Activated naive CD8-positive, alpha-beta T cell treated with anti-CD3 and anti-CD28 coated beads, Interleukin-2, amount 10 ng/mL, durations not matched to agents 7 days and 5 days (primary cell): ENCODE measurements at regions of chr11 and their contacts with region 1.

Region 1: DNA sequence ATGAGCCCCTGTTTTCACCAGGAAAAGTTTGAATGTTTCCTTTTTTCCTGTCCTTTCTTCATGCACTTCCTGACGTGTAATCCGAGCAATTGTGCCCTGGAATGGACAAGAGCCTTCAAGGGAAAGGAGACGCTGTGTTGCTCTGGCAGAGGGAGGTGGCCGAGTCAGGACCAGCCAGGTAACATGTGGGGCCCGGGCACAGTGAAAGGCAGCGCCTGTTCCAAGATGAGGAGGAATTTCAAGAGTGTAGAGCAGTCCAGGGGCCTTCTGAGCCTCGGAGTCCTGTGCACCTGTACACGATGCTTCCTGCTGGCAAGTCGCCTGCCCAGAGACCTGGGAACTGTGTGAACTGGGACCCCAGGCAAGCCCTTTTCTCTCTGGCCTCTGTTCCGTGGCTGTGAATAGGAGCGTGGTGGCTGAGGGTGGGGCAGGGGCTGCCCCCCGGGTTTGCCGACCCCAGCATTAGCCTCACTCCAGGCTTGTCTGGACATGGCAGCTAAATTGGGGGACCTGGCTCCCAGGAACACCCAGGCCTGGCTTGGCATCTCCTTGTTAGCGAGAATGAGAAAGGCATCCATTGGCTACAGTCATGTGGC is 92.0 kb downstream of the MYEOV start:
- DNase-seq: peak; percentile 8
- ATAC-seq: no peak
- H3K4me3 Mint-ChIP-seq: no peak overlapping the region
- H3K27ac Mint-ChIP-seq: no peak overlapping the region
- H3K4me1 Mint-ChIP-seq: peaks cover 2% of the 10 kb centered on the region
- H3K27me3 Mint-ChIP-seq: peaks cover 2% of the 10 kb centered on the region

Region 2: DNA sequence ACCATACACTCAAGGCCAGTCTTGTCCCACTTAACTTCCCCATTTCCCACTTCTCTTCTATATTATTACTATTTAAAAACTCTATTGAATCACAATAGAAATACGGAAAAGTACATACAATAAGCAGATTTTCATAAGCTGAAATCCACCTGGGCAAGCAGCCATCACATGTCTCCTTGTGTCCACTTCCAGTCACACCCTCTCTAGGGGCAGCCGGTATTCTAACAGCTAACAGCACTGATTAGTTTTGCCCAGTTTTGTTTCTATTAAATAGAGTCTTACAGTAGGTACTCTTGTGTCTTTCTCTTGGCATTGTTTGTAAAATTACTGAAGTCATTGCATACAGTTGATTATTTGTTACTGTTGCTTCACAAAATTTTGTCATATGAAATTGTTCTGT is 887.6 kb before region 1 on chr11:
- POLR2A ChIA-PET with region 1: interaction called, 11 read pairs
- DNase-seq: no peak
- ATAC-seq: no peak
- H3K4me3 Mint-ChIP-seq: no peak overlapping the region
- H3K27ac Mint-ChIP-seq: no peak overlapping the region
- H3K4me1 Mint-ChIP-seq: peaks cover 21% of the 10 kb centered on the region
- H3K27me3 Mint-ChIP-seq: no peaks in the 10 kb centered on the region

Region 3: GRCh38 chr11:69352715-69353325 is 33.1 kb before region 1 on chr11:
- POLR2A ChIA-PET with region 1: no interaction called
- DNase-seq: no peak
- ATAC-seq: peak; percentile 66
- H3K4me3 Mint-ChIP-seq: no peak overlapping the region
- H3K27ac Mint-ChIP-seq: no peak overlapping the region
- H3K4me1 Mint-ChIP-seq: peaks cover 3% of the 10 kb centered on the region
- H3K27me3 Mint-ChIP-seq: peaks cover 10% of the 10 kb centered on the region

Region 4: GRCh38 chr11:69497221-69497787 is 111.4 kb after region 1 on chr11:
- POLR2A ChIA-PET with region 1: no interaction called
- DNase-seq: no peak
- ATAC-seq: no peak
- H3K4me3 Mint-ChIP-seq: no peak overlapping the region
- H3K27ac Mint-ChIP-seq: no peak overlapping the region
- H3K4me1 Mint-ChIP-seq: peaks cover 3% of the 10 kb centered on the region
- H3K27me3 Mint-ChIP-seq: no peaks in the 10 kb centered on the region